A549 (cell line): ENCODE measurements at regions of chr11 and their contacts with region 1.

Region 1: GRCh38 chr11:61254403-61255025 is 13.5 kb downstream of the PGA5 start:
- DNase-seq: peak; percentile 70 to 85
- ATAC-seq: peak; percentile 87 to 97
- H3K4me3 ChIP-seq: no peak overlapping the region
- H3K27ac ChIP-seq: no peak overlapping the region
- H3K4me1 ChIP-seq: no peaks in the 10 kb centered on the region
- CTCF ChIP-seq: peak; percentile 78
- EP300 ChIP-seq: no peak
- POLR2A ChIP-seq: no peak
- RAD21 ChIP-seq: peak; percentile 71 to 80

Region 2: DNA sequence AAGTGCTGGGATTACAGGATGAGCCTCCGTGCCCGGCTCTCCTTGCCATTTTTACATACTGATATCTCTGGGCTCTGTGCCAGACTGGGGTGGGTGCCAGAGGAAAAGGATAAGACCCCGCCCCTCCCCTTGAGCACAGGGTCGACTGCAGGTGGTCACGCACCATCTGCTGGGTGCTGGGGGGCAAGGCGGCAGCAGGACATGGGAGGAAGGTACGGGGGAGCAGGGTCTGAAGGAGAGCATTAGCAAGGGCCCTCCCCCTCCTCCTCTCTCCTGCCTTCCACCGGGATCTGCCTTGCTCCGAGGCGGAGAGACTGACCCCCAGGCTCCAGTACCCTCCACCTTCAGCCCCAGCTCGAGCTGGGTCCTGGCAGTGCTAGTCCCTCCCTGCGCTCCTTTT is 60.9 kb before region 1 on chr11:
- CTCF ChIA-PET with region 1: no interaction called
- POLR2A ChIA-PET with region 1: no interaction called
- DNase-seq: no peak
- ATAC-seq: peak in 1 of 2 experiments; percentile 50; a peak in 3 of 6 replicates
- H3K4me3 ChIP-seq: no peak overlapping the region
- H3K27ac ChIP-seq: no peak overlapping the region
- H3K4me1 ChIP-seq: no peaks in the 10 kb centered on the region
- CTCF ChIP-seq: no peak
- EP300 ChIP-seq: no peak
- POLR2A ChIP-seq: no peak
- RAD21 ChIP-seq: no peak

Region 3: DNA sequence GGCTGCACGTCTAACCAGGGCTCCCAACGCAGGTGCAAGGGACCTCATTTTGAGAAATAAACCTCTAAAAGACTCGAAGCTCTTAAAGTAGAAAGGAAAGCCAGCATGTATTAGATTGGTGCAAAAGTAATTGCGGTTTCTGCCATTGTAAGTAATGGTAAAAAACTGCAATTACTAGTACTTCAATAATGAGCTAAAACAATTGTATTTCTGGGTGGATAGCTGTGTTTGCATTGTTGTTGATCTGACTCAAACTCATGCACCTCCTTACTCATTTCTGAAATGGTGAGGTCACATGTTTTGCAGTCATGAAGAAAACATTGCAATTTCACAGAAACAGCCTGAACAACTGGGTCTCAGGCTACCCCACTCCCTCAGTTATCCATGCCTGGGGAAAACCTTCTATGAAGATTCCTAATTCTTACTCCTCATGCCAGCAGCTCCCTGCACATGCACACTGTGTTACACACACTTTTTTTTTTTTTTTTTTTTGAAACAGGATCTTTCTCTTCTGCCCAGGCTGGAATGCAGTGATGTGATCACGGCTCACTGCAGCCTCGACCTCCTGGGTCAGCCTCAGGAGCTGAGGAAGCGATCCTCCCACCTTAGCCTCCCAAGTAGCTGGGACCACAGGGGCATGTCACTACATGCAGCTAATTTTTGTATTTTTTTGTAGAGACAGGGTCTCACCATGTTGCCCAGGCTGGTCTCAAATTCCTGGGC is 16.0 kb after region 1 on chr11:
- CTCF ChIA-PET with region 1: interaction called, 35 read pairs
- POLR2A ChIA-PET with region 1: no interaction called
- DNase-seq: no peak
- ATAC-seq: no peak
- H3K4me3 ChIP-seq: no peak overlapping the region
- H3K27ac ChIP-seq: no peak overlapping the region
- H3K4me1 ChIP-seq: peaks cover 15% of the 10 kb centered on the region
- CTCF ChIP-seq: no peak
- EP300 ChIP-seq: no peak
- POLR2A ChIP-seq: no peak
- RAD21 ChIP-seq: no peak

Region 4: GRCh38 chr11:61281581-61282250 is 27.2 kb after region 1 on chr11:
- CTCF ChIA-PET with region 1: interaction called, 17 read pairs
- POLR2A ChIA-PET with region 1: no interaction called
- DNase-seq: peak; percentile 65 to 67
- ATAC-seq: peak; percentile 75 to 95
- H3K4me3 ChIP-seq: peak overlapping the region; percentile 41
- H3K27ac ChIP-seq: peak overlapping the region in 1 of 2 experiments; percentile 52; a peak in 3 of 6 replicates
- H3K4me1 ChIP-seq: peaks cover 3% of the 10 kb centered on the region; the same call in 1 of the 3 replicates
- CTCF ChIP-seq: no peak
- EP300 ChIP-seq: no peak
- POLR2A ChIP-seq: no peak
- RAD21 ChIP-seq: no peak

Region 5: GRCh38 chr11:61294717-61295595 is 40.4 kb after region 1 on chr11 and contains the start of gene VWCE:
- CTCF ChIA-PET with region 1: interaction called, 28 read pairs
- POLR2A ChIA-PET with region 1: no interaction called
- DNase-seq: peak; percentile 50 to 62
- ATAC-seq: peak; percentile 80 to 87
- H3K4me3 ChIP-seq: peak within 1 kb of the TSS; percentile 61
- H3K27ac ChIP-seq: peak within 1 kb of the TSS; percentile 81 to 87
- H3K4me1 ChIP-seq: peaks cover 14% of the 10 kb centered on the region; the same call in 1 of the 3 replicates
- CTCF ChIP-seq: peak; percentile 29; the same call in 2 of the 3 replicates
- EP300 ChIP-seq: no peak
- POLR2A ChIP-seq: peak; percentile 41
- RAD21 ChIP-seq: peak; percentile 9 to 43; a peak in 4 of 5 replicates
- polyA plus RNA-seq, gene VWCE: 0.53 and 0.65 TPM in 2 replicates

Region 6: GRCh38 chr11:61309739-61310138 is 55.2 kb after region 1 on chr11:
- CTCF ChIA-PET with region 1: interaction called, 15 read pairs
- POLR2A ChIA-PET with region 1: no interaction called
- DNase-seq: no peak
- ATAC-seq: no peak
- H3K4me3 ChIP-seq: no peak overlapping the region
- H3K27ac ChIP-seq: no peak overlapping the region
- H3K4me1 ChIP-seq: no peaks in the 10 kb centered on the region
- CTCF ChIP-seq: no peak
- EP300 ChIP-seq: no peak
- POLR2A ChIP-seq: no peak
- RAD21 ChIP-seq: no peak

Region 7: DNA sequence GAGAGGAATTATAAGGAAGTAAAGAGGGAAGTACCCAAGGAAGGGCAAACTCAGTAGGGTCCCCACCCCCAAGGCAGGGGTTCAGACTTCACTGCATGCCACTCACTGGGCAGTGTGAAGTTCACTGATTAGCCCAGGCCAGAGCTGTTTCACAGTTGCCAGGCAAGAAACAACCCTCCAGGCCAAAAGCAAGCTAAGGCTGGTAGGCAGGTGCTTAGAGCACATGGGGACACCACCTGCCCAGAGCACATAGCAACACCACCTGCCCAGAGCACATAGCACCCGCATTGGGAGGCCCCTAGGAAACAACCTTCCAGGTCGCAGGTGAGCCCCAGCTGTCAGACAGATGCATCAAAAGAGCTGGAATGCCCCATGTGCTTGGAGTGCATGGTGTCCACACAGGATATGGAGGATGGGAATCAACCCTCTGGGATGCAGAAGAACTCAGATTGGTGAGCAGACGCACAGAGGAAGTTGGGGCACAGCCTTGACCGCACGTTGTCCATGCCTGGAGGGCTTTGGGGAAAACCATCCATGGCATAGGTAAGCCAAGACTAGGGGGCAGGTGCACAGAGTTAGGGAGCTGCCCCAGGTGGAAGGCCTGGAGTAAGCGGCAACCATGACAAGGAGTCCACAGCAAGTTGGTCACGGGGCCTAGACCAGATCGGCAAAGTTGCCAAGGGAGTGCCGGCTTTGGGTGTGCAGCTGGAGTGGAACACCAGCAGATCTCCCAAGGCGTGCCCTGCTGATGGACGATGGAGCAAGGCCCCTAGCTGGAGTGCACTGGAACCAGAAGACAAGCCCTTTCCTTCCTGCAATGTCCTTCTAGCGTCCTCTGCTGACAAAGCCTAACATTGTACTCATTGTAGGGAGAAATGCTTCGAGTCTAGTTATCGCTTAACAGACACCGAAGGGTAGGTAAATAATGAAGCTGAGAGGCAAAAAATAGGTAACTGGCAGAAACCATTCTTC is 130.0 kb after region 1 on chr11:
- CTCF ChIA-PET with region 1: interaction called, 34 read pairs
- POLR2A ChIA-PET with region 1: no interaction called
- DNase-seq: peak in 1 of 2 experiments; percentile 66
- ATAC-seq: peak; percentile 72 to 76
- H3K4me3 ChIP-seq: no peak overlapping the region
- H3K27ac ChIP-seq: no peak overlapping the region
- H3K4me1 ChIP-seq: peaks cover 3% of the 10 kb centered on the region; the same call in 2 of the 3 replicates
- CTCF ChIP-seq: peak; percentile 17; the same call in 1 of the 3 replicates
- EP300 ChIP-seq: no peak
- POLR2A ChIP-seq: no peak
- RAD21 ChIP-seq: peak; percentile 28 to 54; a peak in 2 of 5 replicates